Testis (tissue), 5 donors: ENCODE measurements at regions of chr17 and their contacts with region 1.

Region 1: GRCh38 chr17:34361478-34362061 is 1.5 kb downstream of the CCL1 start:
- DNase-seq: peak; percentile 93
- H3K4me3 ChIP-seq: no peak overlapping the region
- H3K27ac ChIP-seq: no peak overlapping the region
- H3K4me1 ChIP-seq: no peaks in the 10 kb centered on the region
- H3K27me3 ChIP-seq: no peaks in the 10 kb centered on the region
- CTCF ChIP-seq: peak; percentile 94 to 95 (median 94)
- POLR2A ChIP-seq: no peak

Region 2: DNA sequence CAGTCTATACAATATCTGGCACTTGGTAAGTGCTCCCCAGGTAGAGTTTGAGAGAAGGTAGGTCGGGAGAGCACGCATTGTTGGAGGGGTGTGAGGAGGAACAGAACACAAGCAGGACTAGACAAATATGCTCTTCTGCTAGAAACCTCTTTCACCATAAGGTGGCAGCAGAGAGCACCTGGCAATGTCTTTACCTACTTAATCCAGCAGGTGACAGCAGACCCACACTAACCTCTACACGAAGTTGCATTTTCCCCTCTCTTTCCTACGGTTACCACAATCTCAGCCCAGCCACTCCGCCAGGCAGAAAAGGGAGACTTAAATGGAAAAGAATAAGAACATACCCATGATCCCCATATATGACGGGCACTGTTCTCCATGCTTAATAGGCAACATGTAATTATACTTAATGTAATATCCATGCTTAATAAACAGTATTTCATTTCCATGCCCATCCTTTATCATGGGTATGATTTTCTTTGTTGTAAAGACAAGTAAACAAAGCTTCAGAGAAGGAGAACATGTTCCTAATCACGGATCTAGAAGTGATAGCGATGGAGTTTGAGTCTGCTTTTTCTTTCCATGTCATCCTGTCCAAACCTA is 161.5 kb before region 1 on chr17:
- intact Hi-C with region 1: loop called (anchors 5 kb)
- DNase-seq: peak; percentile 91
- H3K4me3 ChIP-seq: no peak overlapping the region
- H3K27ac ChIP-seq: no peak overlapping the region
- H3K4me1 ChIP-seq: peaks cover 5% of the 10 kb centered on the region
- H3K27me3 ChIP-seq: no peaks in the 10 kb centered on the region
- CTCF ChIP-seq: peak; percentile 99 to 100 (median 99)
- POLR2A ChIP-seq: no peak

Region 3: GRCh38 chr17:34306466-34306865 is 55.1 kb before region 1 on chr17:
- intact Hi-C with region 1: no loop called
- DNase-seq: peak; percentile 46
- H3K4me3 ChIP-seq: no peak overlapping the region
- H3K27ac ChIP-seq: no peak overlapping the region
- H3K4me1 ChIP-seq: no peaks in the 10 kb centered on the region
- H3K27me3 ChIP-seq: no peaks in the 10 kb centered on the region
- CTCF ChIP-seq: peak; percentile 25 to 45 (median 38)
- POLR2A ChIP-seq: no peak